Activated CD4-positive, alpha-beta memory T cell treated with anti-CD3 and anti-CD28 coated beads for 36 hours (primary cell): ENCODE measurements at regions of chr6 and their contacts with region 1.

Region 1: DNA sequence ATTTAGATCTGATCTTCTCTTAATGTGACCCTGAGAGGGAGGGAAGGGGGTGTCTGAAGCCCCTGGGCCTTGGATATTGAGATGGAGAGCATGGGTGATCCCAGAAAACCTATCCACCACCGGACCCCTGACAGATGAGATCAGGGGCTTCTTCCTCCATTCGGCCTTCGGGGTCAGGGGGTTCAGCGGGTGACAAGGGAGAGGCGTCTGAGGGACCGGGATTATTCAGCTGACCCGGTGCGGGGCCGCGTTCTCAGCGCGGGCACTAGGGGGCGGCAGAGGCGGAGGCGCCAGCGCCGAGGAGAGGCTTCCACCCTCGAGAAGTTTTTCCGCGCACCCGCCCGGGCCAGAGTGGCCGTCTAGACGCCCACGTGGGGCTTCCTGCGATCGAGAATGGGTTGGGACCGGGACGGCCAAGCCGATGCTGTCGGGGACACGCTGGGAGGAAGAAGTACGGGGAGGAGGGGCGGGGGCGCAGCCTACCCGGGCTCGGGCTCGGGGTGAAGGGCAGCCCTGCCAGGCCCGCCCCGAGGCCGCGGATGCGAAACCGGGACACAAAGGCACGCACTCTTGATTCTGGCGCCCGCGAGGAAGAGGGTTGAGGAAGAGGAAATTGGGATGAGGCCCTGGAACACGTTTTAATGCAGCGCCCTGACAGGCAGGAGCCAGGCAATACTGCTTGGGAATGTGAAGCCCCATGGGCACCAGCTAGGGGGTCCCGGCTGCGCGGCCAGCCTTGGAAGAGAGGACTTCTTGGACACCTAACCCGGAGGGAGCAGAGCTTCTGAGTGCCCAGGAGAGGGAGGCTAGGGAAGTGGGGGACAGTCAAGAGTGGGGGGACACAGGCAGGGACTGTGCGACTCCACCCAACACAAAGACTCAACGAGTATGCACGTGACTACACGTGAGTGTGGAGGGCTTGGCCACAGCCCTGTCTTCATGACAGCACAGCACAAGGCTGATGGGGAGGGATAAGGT is 30.6 kb downstream of the COL11A2 start:
- DNase-seq: peak; percentile 88
- H3K4me3 Mint-ChIP-seq: peak overlapping the region; percentile 76
- H3K27ac Mint-ChIP-seq: no peak overlapping the region
- H3K4me1 Mint-ChIP-seq: peaks cover 13% of the 10 kb centered on the region
- H3K27me3 Mint-ChIP-seq: peaks cover 6% of the 10 kb centered on the region

Region 2: DNA sequence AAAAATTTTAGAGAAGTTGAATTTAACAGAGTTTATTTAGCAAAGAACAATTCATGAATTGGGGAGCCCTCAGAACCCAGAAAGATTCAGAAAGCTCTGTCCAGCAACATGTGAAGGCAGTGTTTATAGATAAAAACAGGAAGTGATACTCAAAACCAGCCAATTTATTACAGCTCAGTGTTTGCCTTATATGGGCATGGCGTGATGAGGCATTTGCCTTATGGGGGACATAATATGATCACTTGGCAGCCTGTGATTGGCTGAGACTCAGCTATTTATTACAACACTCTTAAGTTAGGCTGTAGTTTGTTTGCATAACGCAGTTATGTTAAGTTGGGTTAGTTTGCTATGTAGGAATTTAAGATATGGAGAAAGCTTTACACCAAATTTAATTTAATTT is 99.7 kb before region 1 on chr6:
- CTCF ChIA-PET with region 1: no interaction called
- POLR2A ChIA-PET with region 1: no interaction called
- intact Hi-C with region 1: no loop called
- DNase-seq: no peak
- H3K4me3 Mint-ChIP-seq: no peak overlapping the region
- H3K27ac Mint-ChIP-seq: no peak overlapping the region
- H3K4me1 Mint-ChIP-seq: no peaks in the 10 kb centered on the region
- H3K27me3 Mint-ChIP-seq: peaks cover 6% of the 10 kb centered on the region

Region 3: GRCh38 chr6:33172688-33173534 is 11.3 kb after region 1 on chr6:
- CTCF ChIA-PET with region 1: interaction called, 18 read pairs
- POLR2A ChIA-PET with region 1: no interaction called
- intact Hi-C with region 1: no loop called
- DNase-seq: peak; percentile 15
- H3K4me3 Mint-ChIP-seq: no peak overlapping the region
- H3K27ac Mint-ChIP-seq: no peak overlapping the region
- H3K4me1 Mint-ChIP-seq: no peaks in the 10 kb centered on the region
- H3K27me3 Mint-ChIP-seq: peaks cover 7% of the 10 kb centered on the region